Spleen (tissue), 13 donors: ENCODE measurements at regions of chr4 and their contacts with region 1.

Region 1: GRCh38 chr4:86934771-86935565 is at the start of gene AFF1:
- DNase-seq: peak; percentile 97
- H3K4me3 ChIP-seq: peak within 1 kb of the TSS; percentile 78 to 97 (median 88)
- H3K27ac ChIP-seq: peak within 1 kb of the TSS; percentile 93 to 99 (median 96)
- H3K4me1 ChIP-seq: peaks cover 36 to 61% (median 53%) of the 10 kb centered on the region in 6 donors
- H3K27me3 ChIP-seq: no peaks in the 10 kb centered on the region
- CTCF ChIP-seq: peak; percentile 42 to 81 (median 77)
- POLR2A ChIP-seq: peak; percentile 32 to 91 (median 91)
- total RNA-seq, gene AFF1: 75.4 to 119 (median 99.6) TPM

Region 2: DNA sequence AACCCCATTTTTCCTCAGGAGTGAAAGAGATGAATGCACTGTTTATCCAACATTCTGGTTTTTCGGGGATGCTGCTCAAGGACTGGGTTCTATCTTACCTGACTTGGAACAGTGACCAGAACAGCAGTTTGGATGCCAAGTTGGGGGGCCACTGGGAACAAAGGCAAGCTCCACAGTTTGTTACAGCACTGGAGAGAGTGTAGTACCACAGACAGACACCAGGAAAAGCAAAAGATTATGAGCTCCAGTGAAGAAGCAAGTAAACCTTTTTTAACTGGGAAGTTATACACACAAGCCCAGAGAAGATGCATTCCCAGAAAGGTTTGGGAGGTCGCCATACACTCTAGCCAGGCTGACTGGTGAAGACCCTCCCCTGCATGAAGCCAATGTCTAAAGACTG is 56.3 kb before region 1 on chr4:
- intact Hi-C with region 1: no loop called
- DNase-seq: no peak
- H3K4me3 ChIP-seq: no peak overlapping the region
- H3K27ac ChIP-seq: no peak overlapping the region
- H3K4me1 ChIP-seq: no peaks in the 10 kb centered on the region
- H3K27me3 ChIP-seq: no peaks in the 10 kb centered on the region
- CTCF ChIP-seq: no peak
- POLR2A ChIP-seq: no peak

Region 3: DNA sequence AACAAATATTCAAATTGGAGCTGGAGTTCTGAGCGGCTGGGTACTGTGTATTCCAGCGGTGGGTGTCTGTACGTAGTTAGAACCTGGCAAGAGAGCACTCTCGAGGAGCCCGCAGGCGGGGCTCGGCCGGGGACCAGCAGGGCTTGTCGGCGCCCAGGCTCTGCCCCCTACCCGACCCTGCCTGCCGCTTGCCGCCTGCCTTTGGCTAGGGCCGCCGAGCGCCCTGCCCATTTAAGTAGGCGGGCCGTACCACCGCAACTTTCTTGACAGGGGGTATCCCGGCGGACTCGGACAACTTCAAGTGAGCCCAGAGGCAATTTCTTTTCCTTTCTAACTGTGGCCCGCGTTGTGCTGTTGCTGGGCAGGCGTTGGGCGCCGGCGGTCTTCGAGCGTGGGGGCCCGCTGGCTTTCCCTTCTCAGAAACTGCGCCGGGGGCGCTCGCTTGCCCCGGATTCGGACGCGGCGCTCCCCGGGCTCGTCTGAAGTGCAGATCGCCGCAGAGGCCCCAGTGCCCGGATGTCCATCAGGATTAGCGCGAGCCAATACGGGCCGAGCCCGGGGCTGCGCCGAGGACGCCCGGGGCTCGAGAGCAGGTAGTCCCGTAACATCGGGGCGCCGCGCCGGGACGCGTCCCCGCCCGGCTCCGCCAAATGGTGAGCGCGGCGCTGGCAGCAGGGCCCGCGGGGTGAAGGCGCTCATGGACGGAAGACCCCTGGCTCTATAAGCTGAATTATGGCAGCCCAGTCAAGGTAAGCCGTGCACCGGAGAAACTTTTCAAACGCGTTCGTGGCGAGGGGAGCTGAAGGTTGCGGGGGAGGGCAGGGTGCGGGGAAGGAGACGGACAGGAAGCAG is 71.9 kb after region 1 on chr4:
- intact Hi-C with region 1: loop called (anchors 5 kb)
- DNase-seq: peak; percentile 99
- H3K4me3 ChIP-seq: peak overlapping the region; percentile 60 to 86 (median 72)
- H3K27ac ChIP-seq: peak overlapping the region; percentile 94 to 99 (median 98)
- H3K4me1 ChIP-seq: peaks cover 36 to 68% (median 56%) of the 10 kb centered on the region in 6 donors
- H3K27me3 ChIP-seq: no peaks in the 10 kb centered on the region
- CTCF ChIP-seq: peak in 7 of 11 experiments; percentile 10 to 41 (median 26)
- POLR2A ChIP-seq: peak; percentile 93 to 100 (median 96)